T-cell (primary cell): ENCODE measurements at regions of chr4 and their contacts with region 1.

Region 1: DNA sequence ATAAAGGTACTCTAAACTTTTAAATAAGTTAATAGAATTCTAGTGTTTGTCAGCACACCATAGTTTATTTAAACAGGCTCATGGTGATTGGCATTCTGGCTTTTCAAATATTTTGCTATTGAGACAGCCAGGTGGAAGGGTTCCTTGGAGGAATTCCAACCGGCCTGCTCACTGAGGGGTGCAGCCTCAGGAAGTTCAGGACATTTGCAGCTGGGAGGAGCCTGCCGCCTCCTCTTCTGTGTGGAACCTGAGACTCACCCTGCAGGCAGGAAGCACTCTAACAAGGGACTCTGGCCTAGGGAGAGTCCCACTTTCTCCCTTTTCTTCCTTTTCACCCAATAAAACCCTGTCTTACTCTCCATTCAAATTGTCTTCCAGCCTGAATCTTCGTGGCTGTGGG is 1328.0 kb downstream of the FSTL5 start:
- DNase-seq: no peak
- ATAC-seq: no peak
- H3K4me3 ChIP-seq: no peak overlapping the region
- H3K4me3 Mint-ChIP-seq: no peak overlapping the region
- H3K27ac ChIP-seq: no peak overlapping the region
- H3K27ac Mint-ChIP-seq: no peak overlapping the region
- H3K4me1 ChIP-seq: no peaks in the 10 kb centered on the region
- H3K4me1 Mint-ChIP-seq: no peaks in the 10 kb centered on the region
- H3K27me3 ChIP-seq: no peaks in the 10 kb centered on the region
- H3K27me3 Mint-ChIP-seq: no peaks in the 10 kb centered on the region

Region 2: DNA sequence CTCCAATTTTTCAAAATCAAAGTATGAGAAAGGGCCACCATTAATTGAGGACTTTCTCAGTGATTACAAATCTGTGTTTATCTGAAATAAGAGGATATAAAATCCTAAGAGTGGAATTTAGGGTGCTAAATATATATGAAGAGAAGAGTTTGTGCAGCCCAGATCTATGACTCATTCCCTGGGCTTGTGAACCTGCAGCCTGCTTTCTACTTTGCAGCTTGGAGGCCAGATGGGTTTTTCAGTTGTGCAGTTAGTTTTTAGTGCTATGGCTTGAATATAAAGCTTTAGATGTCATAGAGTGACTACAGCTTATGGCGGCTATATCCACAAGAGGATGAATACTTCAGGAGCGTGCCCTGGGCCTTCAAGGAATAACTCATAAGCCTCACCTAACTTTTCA is 63.1 kb before region 1 on chr4:
- CTCF ChIA-PET with region 1: interaction called in 1 of 2 experiments, 10 read pairs
- POLR2A ChIA-PET with region 1: no interaction called
- DNase-seq: no peak
- ATAC-seq: no peak
- H3K4me3 ChIP-seq: no peak overlapping the region
- H3K4me3 Mint-ChIP-seq: no peak overlapping the region
- H3K27ac ChIP-seq: no peak overlapping the region
- H3K27ac Mint-ChIP-seq: no peak overlapping the region
- H3K4me1 ChIP-seq: no peaks in the 10 kb centered on the region
- H3K4me1 Mint-ChIP-seq: no peaks in the 10 kb centered on the region
- H3K27me3 ChIP-seq: no peaks in the 10 kb centered on the region
- H3K27me3 Mint-ChIP-seq: no peaks in the 10 kb centered on the region

Region 3: GRCh38 chr4:160795216-160795615 is 40.6 kb before region 1 on chr4:
- CTCF ChIA-PET with region 1: no interaction called
- POLR2A ChIA-PET with region 1: no interaction called
- DNase-seq: no peak
- ATAC-seq: no peak
- H3K4me3 ChIP-seq: no peak overlapping the region
- H3K4me3 Mint-ChIP-seq: no peak overlapping the region
- H3K27ac ChIP-seq: no peak overlapping the region
- H3K27ac Mint-ChIP-seq: no peak overlapping the region
- H3K4me1 ChIP-seq: no peaks in the 10 kb centered on the region
- H3K4me1 Mint-ChIP-seq: no peaks in the 10 kb centered on the region
- H3K27me3 ChIP-seq: no peaks in the 10 kb centered on the region
- H3K27me3 Mint-ChIP-seq: no peaks in the 10 kb centered on the region